GM10248 (cell line): ENCODE measurements at regions of chr14 and their contacts with region 1.

Region 1: GRCh38 chr14:67704484-67705089 is 2.9 kb downstream of the RDH12 start:
- DNase-seq: peak; percentile 67
- CTCF ChIP-seq: peak; percentile 72

Region 2: GRCh38 chr14:67599698-67600561 is 104.7 kb before region 1 on chr14 and contains the start of gene PIGH:
- CTCF ChIA-PET with region 1: interaction called, 19 read pairs
- POLR2A ChIA-PET with region 1: no interaction called
- DNase-seq: peak; percentile 95
- CTCF ChIP-seq: peak; percentile 54

Region 3: DNA sequence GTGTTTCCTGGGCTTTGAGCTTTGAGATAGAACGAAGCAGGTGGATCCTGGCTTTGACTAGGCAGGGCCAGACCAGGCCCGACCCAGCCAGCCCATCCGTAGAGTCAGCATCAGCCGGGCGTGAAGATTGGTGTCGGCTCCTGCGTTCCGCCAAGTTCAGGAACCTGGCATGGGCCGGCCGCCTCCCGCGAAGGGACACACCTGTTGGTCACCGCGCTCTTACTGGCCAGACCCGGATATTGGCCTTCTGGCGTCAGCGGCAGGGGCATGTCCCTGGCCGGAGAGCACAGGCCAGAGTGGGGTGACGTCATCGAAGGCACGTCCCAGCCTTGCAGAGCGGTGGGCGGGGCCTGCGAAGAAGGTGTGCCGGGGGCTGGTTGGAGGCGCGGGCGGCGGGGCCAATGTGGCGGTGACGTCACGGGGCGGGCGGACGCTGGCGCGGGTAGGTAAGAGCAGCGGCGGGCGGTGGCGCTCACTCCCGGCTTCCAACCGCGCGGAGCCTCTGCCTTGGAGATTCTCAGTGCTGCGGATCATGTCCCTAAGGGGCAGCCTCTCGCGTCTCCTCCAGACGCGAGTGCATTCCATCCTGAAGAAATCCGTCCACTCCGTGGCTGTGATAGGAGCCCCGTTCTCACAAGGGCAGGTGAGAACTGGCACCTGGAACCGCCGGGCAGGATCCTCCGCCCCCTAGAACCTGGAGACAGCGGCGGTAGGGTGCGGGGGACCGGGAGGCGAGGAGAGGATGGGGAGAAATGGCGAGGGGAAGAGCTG is 85.0 kb before region 1 on chr14 and contains the start of gene ARG2:
- CTCF ChIA-PET with region 1: interaction called, 45 read pairs
- POLR2A ChIA-PET with region 1: no interaction called
- DNase-seq: peak; percentile 97
- CTCF ChIP-seq: peak; percentile 7

Region 4: DNA sequence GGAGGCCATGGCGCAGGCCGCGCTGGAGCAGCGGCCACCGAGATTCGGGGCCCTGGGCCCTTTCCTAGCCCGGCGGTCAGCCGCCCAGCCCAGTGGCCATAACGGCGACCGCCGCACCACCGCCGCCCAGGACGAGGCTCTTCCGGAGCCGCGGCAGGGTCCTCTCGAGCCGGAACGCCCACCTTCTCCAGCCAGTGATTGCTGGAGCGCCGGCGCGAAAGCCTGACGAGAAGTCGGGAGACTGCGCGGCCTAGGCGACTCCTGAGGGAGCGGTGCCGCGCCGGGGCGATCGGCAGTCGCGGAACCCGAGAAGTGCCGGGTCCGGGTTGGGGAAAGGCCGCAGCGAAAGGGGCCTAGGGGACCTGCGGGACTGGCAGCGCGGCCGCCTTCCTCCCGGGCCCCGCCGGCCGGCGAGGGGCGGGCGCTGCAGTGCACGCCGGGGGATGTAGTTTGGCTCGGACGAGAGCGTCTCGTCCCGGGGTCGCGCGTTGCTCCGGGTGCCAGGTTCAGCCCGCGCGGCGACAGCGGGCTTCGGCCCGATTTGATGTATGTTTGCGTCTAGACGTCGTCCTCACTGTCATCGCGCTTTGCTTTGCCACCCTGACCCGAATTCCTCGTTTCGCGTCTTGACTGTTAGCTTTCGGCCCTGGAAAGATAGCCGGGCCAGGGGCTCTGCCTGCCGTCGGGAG is 30.0 kb before region 1 on chr14 and contains the start of gene VTI1B:
- CTCF ChIA-PET with region 1: interaction called, 110 read pairs
- POLR2A ChIA-PET with region 1: no interaction called
- DNase-seq: peak; percentile 90
- CTCF ChIP-seq: peak; percentile 28

Region 5: DNA sequence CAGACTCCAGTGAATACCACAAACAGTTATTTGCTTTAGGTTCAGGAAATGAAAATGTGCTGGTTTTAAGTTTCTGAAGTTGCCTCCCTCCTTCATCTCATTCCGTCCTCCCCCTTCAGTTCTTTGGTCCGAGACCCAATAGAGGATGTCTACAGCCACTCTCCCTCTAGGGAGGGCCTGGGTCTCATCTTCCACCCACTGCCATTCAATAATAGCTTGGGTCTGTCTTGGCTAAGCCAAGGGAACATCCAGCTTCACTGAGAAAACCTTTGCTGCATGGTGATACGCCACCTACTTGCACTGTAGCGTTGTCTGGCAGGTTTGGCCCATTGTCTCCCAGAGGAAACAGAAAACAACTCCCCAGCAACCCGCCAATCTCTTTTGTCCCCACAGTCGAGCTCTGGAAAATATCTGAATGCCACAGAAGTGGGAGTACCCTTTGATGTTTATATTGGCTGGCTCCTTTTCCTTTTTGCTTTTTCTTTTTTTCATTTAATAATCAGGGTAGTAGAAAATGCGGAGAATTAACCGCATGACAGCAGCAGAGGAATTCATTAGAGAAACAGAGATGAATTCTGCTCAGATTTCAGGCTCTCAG is 495.1 kb after region 1 on chr14:
- CTCF ChIA-PET with region 1: no interaction called
- POLR2A ChIA-PET with region 1: no interaction called
- DNase-seq: no peak
- CTCF ChIP-seq: no peak